Activated CD4-positive, alpha-beta T cell treated with anti-CD3 and anti-CD28 coated beads, Interleukin-2, amount 10 ng/mL, durations not matched to agents 24 days and 14 days (primary cell): ENCODE measurements at regions of chr1 and their contacts with region 1.

Region 1: GRCh38 chr1:28248283-28249012 is 10.9 kb upstream of the SESN2 start:
- DNase-seq: peak; percentile 94
- H3K4me3 Mint-ChIP-seq: peak overlapping the region; percentile 93
- H3K27ac Mint-ChIP-seq: peak overlapping the region; percentile 93
- H3K4me1 Mint-ChIP-seq: peaks cover 43% of the 10 kb centered on the region
- H3K27me3 Mint-ChIP-seq: no peaks in the 10 kb centered on the region

Region 2: DNA sequence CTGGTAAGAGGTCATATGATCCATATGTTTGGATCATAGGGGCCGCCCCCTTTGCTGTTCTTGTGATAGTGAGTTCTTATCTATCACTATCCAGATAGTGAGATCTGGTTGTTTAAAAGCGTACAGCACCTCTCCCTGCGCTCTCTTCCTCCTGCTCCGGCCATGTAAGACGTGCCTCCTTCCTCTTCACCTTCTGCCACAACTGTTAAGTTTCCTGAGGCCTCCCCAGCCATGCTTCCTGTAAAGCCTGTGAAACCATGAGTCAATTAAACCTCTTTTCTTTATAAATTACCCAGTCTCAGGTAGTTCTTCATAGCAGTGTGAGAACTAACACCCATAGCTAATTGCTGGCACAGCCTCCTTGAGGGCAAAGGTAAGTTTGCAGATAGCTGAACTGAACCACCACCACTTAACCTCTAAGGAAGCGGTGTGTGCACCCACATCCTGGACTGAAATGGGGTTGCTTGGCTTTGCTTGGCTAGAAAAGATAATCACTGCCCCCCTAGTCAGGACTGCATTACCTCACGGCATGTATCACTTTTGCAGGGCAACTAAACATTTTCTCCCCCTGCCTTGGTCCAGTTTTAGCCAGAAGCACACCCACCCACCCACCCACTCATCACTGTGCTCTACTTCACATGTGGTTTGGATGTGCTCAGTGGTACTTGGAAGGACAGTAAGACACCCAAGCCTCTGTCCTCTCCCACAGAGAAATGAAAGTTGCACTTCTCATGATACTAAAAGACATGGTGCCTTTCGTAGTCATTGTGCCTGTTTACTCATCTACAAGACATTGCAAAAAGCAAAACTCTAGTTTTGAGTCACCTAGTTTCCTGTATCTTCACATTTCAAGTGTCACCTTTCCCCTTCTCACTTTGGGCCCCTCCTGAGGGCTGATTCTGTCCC is 48.9 kb before region 1 on chr1:
- intact Hi-C with region 1: loop called (anchors 2 kb)
- DNase-seq: peak; percentile 93
- H3K4me3 Mint-ChIP-seq: peak overlapping the region; percentile 73
- H3K27ac Mint-ChIP-seq: peak overlapping the region; percentile 90
- H3K4me1 Mint-ChIP-seq: peaks cover 42% of the 10 kb centered on the region
- H3K27me3 Mint-ChIP-seq: no peaks in the 10 kb centered on the region

Region 3: DNA sequence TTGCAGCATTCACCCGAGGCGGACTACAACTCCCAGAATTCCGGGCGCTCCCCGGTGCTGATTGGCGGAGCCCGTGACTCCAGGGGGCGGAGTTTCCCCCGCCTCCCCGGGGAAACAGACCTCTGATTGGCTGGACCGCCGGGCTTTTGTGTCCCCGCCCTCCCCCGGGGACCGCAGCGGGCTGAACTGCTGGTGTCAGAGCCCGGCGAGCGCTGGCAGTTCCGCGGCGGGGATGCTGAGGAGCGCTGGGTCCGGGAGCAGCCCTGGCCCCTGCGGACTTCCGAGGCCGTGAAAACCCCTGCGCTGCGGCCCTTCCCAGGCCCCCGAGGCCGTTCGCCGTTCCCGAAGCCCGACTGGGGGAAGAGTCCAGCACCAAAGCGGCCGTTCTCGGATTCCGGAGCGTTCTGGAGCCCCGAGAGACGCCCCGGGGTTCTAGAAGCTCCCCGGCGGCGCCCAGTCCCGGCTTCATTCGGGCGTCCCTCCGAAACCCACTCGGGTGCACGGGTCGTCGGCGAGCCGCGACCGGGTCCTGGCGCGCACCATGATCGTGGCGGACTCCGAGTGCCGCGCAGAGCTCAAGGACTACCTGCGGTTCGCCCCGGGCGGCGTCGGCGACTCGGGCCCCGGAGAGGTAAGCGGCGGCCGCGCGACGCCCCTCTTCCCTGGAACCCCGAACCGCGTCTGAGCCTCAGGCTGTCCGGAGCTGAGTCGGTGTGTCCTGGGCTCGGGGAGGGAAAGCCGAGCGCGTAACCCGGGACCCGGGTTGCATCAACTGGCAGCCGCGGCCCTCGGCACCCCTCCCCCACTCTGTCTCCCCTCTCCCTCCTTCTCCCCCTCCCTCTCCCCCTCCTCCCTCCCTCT is 11.1 kb after region 1 on chr1 and contains the start of gene SESN2:
- intact Hi-C with region 1: loop called (anchors 1 kb)
- DNase-seq: peak; percentile 100
- H3K4me3 Mint-ChIP-seq: peak within 1 kb of the TSS; percentile 78
- H3K27ac Mint-ChIP-seq: peak within 1 kb of the TSS; percentile 86
- H3K4me1 Mint-ChIP-seq: peaks cover 34% of the 10 kb centered on the region
- H3K27me3 Mint-ChIP-seq: no peaks in the 10 kb centered on the region
- total RNA-seq, gene SESN2: 14.1 and 14.8 TPM in 2 replicates

Region 4: DNA sequence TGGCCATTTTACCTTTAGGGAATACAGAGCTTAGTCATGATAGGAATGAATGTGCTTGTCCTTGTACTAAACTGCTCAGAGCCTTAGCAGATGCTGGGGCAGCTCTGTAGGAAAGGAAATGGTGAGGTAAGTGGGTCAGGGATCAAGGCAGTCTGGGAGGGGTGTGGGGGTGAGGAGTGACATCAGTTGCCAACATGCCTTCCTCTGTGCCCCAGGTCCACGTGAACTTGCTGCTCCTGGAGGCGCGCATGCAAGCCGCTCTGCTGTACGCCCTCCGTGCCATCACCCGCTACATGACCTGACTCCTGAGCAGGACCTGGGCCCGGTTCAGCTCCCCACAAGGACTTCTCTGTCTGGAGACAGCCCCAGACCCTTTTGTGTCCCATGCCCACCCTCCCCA is 32.1 kb after region 1 on chr1:
- intact Hi-C with region 1: no loop called
- DNase-seq: no peak
- H3K4me3 Mint-ChIP-seq: no peak overlapping the region
- H3K27ac Mint-ChIP-seq: no peak overlapping the region
- H3K4me1 Mint-ChIP-seq: peaks cover 2% of the 10 kb centered on the region
- H3K27me3 Mint-ChIP-seq: no peaks in the 10 kb centered on the region

Region 5: GRCh38 chr1:28369371-28370238 is 121.2 kb after region 1 on chr1 and contains the start of gene PHACTR4:
- intact Hi-C with region 1: loop called (anchors 1 kb)
- DNase-seq: peak; percentile 95
- H3K4me3 Mint-ChIP-seq: peak within 1 kb of the TSS; percentile 95
- H3K27ac Mint-ChIP-seq: peak within 1 kb of the TSS; percentile 95
- H3K4me1 Mint-ChIP-seq: peaks cover 32% of the 10 kb centered on the region
- H3K27me3 Mint-ChIP-seq: no peaks in the 10 kb centered on the region
- total RNA-seq, gene PHACTR4: 29.6 and 30.5 TPM in 2 replicates

Region 6: DNA sequence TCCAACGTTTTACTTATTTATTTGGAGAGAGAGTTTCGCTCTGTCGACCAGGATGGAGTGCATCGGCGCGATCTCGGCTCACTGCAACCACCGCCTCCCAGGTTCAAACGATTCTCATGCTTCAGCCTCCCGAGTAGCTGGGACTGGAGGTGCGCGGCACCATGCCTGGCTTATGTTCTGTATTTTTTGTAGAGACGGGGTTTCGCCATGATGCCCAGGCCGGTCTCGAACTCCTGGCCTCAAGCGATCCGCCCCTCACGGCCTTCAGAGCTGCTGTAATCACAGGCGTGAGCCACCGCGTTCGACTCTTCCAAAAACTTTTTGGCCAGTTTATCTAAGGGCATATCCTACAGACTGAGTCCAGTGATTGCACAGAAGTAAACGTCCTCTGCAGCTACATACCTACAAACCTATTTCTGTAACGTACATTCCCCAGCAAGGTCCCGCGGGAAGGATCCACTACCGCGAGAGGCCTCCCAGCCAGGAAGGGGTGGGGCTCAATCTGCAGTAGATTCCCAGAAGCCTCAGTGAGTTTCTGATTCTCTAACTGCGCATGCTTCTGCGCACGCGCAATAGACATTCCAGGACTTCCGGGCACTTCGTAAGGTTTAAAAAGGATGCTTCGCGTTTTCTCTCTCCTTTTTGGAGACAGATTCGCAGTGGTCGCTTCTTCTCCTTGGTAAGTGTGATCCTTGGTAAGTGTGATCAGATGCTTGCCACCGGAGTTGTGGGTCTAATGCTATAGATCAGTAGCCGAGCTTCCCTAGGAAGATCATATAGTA is 257.1 kb after region 1 on chr1 and contains the start of gene RCC1:
- intact Hi-C with region 1: loop called (anchors 2 kb)
- DNase-seq: peak; percentile 99
- H3K4me3 Mint-ChIP-seq: peak within 1 kb of the TSS; percentile 92
- H3K27ac Mint-ChIP-seq: peak within 1 kb of the TSS; percentile 99
- H3K4me1 Mint-ChIP-seq: peaks cover 29% of the 10 kb centered on the region
- H3K27me3 Mint-ChIP-seq: peaks cover 2% of the 10 kb centered on the region
- total RNA-seq, gene RCC1: 143 and 145 TPM in 2 replicates

Region 7: DNA sequence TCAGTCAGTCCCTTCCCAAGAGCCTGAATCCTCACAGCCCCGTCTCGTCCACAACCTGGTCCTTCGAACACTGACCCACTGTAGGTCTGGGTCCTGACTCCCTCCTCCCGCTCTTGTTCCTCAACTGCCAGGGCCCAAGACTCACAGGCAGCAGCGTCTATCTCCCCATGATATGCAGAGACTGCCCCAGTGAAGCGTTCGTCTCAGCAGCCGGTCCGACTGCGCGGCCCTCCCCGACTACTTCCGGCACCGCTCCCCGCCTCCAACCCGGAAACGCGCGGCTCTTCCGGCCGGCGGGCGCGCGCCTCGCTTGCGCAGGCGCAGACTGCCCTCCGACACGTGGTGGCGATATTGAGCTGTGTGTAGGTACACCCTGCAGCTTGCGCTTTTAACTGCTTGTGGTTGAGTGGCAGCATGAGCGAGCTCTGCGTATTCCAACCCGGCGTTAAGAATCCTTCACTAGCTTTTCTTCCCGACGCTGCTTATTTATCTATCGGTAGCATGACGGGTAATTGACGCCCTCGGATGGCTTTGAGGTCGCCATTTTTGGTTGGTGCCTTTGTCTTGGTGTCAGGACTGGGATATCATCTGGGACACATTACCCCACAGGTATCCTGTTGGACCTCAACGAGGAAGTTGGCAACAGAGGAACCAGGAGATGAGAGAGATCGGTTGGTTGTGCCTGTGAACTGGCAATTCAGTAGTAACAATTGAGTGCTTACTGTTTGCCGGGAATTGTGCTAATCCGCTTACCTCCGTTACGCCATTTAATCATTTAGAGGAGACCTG is 394.6 kb after region 1 on chr1 and contains the start of gene TAF12:
- intact Hi-C with region 1: loop called (anchors 2 kb)
- DNase-seq: peak; percentile 96
- H3K4me3 Mint-ChIP-seq: peak within 1 kb of the TSS; percentile 98
- H3K27ac Mint-ChIP-seq: peak within 1 kb of the TSS; percentile 99
- H3K4me1 Mint-ChIP-seq: peaks cover 39% of the 10 kb centered on the region
- H3K27me3 Mint-ChIP-seq: no peaks in the 10 kb centered on the region
- total RNA-seq, gene TAF12: 31.7 and 33.8 TPM in 2 replicates